MCF 10A (cell line): ENCODE measurements at regions of chr16 and their contacts with region 1.

Region 1: GRCh38 chr16:89217388-89218191 is at the start of gene ZNF778:
- DNase-seq: peak; percentile 78
- H3K4me3 Mint-ChIP-seq: peak within 1 kb of the TSS; percentile 88
- H3K27ac Mint-ChIP-seq: peak within 1 kb of the TSS; percentile 47
- H3K4me1 Mint-ChIP-seq: peaks cover 6% of the 10 kb centered on the region
- H3K27me3 Mint-ChIP-seq: no peaks in the 10 kb centered on the region
- CTCF ChIP-seq: no peak
- total RNA-seq, gene ZNF778: 13.5 and 15.8 TPM in 2 replicates

Region 2: DNA sequence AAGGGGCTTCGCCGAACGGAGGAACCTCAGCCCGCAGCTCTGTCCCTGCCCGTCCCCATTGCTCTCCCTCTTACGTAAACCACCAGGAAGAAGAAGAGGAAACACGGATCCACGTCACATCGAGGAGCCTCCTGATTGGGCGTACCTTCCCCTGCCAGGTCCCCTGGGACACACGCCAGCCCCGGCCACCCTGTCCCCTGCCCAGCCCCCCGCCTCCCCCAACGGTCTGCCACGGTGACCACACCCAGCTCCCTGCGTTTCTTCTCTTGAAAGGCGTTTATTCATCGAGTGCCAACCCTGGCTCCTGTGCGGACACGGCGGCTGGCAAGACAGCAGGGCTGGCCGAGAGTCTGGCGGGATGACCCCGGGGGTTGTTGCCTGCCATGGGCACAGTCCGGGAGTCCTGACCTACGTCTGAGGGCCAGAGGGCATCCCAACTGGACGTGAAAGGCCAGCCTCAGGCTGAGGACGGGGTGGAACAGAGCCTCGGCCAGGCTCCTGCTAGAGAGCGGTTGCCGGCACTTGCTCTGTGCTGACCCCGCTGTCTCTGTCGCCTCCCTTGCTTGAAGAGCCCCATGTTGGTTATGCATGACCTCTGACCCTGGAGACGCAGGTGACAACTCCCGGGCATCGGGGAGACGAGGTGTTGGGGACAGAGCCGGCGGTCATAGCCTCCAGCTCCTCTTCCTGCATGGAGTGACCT is 164.5 kb before region 1 on chr16:
- CTCF ChIA-PET with region 1: no interaction called
- POLR2A ChIA-PET with region 1: interaction called, 4 read pairs
- intact Hi-C with region 1: loop called (anchors 1 kb)
- DNase-seq: peak; percentile 73
- H3K4me3 Mint-ChIP-seq: peak overlapping the region; percentile 86
- H3K27ac Mint-ChIP-seq: peak overlapping the region; percentile 92
- H3K4me1 Mint-ChIP-seq: peaks cover 10% of the 10 kb centered on the region
- H3K27me3 Mint-ChIP-seq: peaks cover 11% of the 10 kb centered on the region
- CTCF ChIP-seq: peak; percentile 30